AG04449 (cell line): ENCODE measurements at regions of chr17 and their contacts with region 1.

Region 1: DNA sequence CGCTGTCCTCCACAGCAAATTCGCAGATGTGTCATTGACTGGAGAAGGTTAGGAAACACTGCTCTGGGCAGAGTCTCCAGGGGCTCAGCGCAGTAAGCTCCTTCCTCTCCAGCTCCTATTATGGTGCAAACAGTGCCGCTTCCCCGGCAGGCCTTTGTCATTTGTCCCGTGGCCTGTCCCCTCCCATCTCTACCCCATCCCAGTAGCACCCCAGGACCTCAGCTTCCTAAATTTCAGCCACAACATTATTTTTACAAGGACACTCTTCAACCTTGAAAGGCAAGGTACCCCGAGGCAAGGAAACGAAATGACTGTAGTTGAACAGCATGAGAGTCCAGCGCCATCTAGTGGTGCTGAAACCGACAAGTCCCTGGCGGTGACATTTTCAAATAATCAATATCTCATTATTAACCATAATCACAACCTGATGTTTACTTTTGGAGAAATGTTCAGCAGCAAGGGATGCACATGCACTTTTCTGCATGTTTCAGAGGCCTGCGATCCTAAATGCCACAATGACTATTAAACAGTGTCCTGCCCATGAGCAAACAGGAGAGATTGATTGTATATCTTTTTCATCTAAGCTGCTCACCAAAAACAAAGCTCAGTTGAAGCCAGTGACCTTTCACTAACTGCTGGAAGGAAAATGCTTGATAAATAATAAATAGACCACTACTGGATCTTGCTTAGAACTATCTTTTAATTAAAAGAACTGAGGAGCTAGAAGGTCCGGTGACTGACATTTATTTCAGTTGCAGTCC is 16.5 kb downstream of the MRPS23 start:
- DNase-seq: no peak
- H3K4me3 ChIP-seq: peak overlapping the region; percentile 58
- CTCF ChIP-seq: peak; percentile 78

Region 2: GRCh38 chr17:57121338-57122042 is 711.9 kb before region 1 on chr17:
- CTCF ChIA-PET with region 1: interaction called, 106 read pairs
- POLR2A ChIA-PET with region 1: no interaction called
- DNase-seq: peak; percentile 4
- H3K4me3 ChIP-seq: no peak overlapping the region
- CTCF ChIP-seq: peak; percentile 64

Region 3: GRCh38 chr17:57130761-57131461 is 702.4 kb before region 1 on chr17:
- CTCF ChIA-PET with region 1: interaction called, 106 read pairs
- POLR2A ChIA-PET with region 1: no interaction called
- DNase-seq: peak; percentile 16
- H3K4me3 ChIP-seq: peak overlapping the region; percentile 44
- CTCF ChIP-seq: peak; percentile 86

Region 4: GRCh38 chr17:57612202-57613071 is 220.9 kb before region 1 on chr17:
- CTCF ChIA-PET with region 1: no interaction called
- POLR2A ChIA-PET with region 1: no interaction called
- DNase-seq: no peak
- H3K4me3 ChIP-seq: no peak overlapping the region
- CTCF ChIP-seq: no peak

Region 5: DNA sequence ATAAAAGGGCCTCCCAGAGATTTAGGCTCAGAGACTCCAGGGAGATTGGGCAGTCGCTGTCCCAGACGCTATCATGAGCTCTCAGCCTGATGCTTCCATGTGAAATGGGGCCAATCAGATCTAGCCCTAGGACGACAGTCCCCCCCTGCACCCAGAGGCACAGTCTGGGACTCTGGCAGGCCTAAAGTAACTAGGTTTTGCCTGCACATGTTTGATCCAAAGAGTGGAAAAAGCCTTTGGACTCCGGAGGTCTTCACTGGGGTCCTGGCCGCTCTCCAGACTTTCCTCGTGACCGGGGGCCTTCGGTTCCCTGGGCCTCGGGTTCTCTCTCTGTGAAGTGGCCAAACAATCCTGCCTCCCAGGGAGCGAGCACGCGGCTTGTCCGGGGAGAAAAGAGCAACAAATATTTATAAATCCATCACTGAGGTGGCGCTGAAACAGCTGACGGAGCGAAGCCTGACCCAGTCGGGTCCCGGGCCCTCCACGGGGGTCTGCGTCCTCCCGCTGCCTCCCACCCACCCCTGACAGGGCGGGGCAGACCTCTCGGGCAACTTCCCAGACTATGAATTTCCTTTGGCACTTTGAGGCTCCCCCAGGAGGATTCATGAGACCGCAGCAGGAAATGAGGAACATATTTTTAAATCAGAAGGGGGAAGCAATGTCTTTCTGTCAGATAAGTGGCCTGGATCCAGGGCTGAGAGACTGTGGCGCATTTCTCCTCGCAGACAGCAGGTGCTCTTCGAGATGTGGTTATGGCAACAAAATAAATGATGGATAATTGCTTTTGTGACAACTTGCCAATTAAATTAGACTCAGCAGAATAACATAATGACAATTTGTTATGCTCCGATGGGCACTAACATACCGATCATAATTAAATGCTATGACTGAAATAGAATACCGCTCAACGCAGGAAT is 22.4 kb before region 1 on chr17:
- CTCF ChIA-PET with region 1: interaction called, 80 read pairs
- POLR2A ChIA-PET with region 1: no interaction called
- DNase-seq: no peak
- H3K4me3 ChIP-seq: no peak overlapping the region
- CTCF ChIP-seq: no peak

Region 6: DNA sequence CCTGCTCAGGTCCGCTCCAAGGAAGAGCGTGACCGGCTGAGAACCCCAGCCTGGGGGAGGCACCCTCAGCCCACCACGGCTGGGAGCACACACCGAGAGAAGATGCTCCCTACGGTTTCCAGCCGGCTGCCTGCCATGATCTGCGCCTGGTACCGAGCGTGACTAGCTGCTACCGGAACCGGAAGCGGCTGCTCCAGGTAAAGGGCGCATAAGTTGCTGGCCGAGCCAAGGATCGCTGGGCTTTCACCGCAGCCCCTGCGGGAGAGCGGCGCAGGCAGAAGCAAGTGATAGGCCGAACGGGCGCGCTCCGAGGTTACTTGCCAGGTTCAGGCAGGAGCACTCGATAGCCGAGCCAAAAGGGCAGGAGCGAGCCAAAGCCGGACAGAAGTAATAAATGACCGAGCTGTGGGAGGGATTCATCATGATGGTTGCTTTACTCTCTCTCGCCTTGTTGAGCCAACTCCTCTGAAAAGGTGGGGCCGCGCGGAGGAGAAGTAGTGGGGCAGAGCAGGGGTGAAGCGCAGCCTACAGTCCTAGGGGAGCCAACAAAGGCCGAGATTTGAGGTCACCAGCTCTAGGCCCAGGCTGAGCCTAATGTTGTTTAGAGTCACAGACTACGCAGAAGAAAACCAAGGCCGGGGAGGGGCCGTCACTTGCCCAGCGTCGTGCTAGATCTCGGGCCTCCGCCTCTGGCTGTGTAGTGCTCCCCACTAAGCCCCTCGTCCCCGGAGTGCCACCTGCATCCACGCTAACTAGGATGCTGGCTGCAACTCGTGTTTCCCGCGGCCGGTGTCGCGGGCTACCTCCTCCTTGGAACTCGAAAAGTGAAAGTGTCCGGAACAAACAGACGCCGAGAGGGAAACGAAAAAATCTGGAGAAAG is 16.8 kb after region 1 on chr17 and contains the start of gene MRPS23:
- CTCF ChIA-PET with region 1: interaction called, 60 read pairs
- POLR2A ChIA-PET with region 1: no interaction called
- DNase-seq: peak; percentile 95
- H3K4me3 ChIP-seq: peak within 1 kb of the TSS; percentile 99
- CTCF ChIP-seq: no peak

Region 7: GRCh38 chr17:58043221-58044181 is 210.1 kb after region 1 on chr17:
- CTCF ChIA-PET with region 1: no interaction called
- POLR2A ChIA-PET with region 1: no interaction called
- DNase-seq: no peak
- H3K4me3 ChIP-seq: no peak overlapping the region
- CTCF ChIP-seq: no peak